ENCODE measurements at regions of chr2 and their contacts with region 1.

Region 1: GRCh38 chr2:176118601-176119339 is 2.2 kb downstream of the HOXD10 start:
- DNase-seq: peak in 1 of 5 donors; percentile 15
- H3K4me3 ChIP-seq: peak overlapping the region; percentile 43
- H3K27ac ChIP-seq: no peak overlapping the region
- H3K4me1 ChIP-seq: no peaks in the 10 kb centered on the region
- H3K27me3 ChIP-seq: no peaks in the 10 kb centered on the region
- CTCF ChIP-seq: no peak
- EP300 ChIP-seq: no peak
- POLR2A ChIP-seq: no peak

Region 2: DNA sequence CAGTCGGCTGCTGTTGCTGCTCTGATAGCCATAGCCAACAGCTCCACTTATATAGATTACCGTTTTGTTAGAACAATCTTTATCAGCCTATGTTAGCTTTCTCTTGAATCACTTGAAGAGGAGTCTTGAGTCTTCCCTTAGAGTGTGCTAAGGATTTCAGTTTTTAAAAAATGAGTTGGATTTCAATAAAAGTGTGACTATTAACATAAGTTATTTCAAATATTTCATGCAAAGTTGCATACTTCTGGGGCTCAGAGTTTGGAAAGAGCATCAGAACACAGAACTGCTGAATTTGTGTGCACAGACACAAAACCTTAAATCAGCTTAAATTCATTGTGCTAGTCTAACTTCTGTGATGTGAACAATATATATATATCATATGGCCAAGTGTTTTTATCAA is 325.2 kb after region 1 on chr2:
- intact Hi-C with region 1: no loop called
- DNase-seq: no peak
- H3K4me3 ChIP-seq: no peak overlapping the region
- H3K27ac ChIP-seq: no peak overlapping the region
- H3K4me1 ChIP-seq: no peaks in the 10 kb centered on the region
- H3K27me3 ChIP-seq: no peaks in the 10 kb centered on the region
- CTCF ChIP-seq: no peak
- EP300 ChIP-seq: no peak
- POLR2A ChIP-seq: no peak

Region 3: DNA sequence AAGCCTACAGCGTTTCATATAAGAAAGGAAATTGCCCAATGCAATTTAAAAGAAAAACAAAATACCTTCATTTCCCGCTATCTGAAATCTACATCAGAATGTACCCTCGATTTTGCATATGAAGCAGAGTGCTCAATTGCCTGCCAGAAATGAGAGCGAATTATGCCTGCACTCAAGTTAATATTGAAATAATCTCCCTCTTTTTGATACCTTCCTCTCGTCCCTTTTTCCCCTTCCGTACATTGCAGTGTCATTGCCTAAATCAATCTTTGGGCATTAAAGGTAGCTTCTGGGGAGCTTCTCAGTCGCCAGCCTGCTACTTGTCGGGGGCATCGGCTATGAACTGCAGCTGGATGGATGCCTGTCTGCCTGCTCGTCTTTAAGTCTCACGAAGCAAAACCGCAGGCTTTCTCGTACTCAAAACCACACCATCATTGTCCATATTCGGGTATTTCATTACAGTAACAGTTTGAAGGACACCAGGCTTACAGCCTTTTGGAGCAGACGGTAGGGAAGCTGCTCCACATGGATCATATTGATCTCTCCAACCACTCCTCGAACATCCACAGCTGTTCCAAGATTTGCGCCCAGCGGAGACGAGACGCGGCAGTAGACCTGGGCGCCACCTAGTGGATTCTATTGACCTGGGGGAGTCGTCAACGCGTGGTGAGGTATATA is 1029.8 kb after region 1 on chr2:
- intact Hi-C with region 1: loop called in 1 of 4 experiments (anchors 5 kb)
- DNase-seq: peak; percentile 49 to 71 (median 70)
- H3K4me3 ChIP-seq: peak overlapping the region; percentile 33
- H3K27ac ChIP-seq: no peak overlapping the region
- H3K4me1 ChIP-seq: no peaks in the 10 kb centered on the region
- H3K27me3 ChIP-seq: no peaks in the 10 kb centered on the region
- CTCF ChIP-seq: peak in 2 of 3 donors; percentile 10 to 19
- EP300 ChIP-seq: no peak
- POLR2A ChIP-seq: no peak

Region 4: DNA sequence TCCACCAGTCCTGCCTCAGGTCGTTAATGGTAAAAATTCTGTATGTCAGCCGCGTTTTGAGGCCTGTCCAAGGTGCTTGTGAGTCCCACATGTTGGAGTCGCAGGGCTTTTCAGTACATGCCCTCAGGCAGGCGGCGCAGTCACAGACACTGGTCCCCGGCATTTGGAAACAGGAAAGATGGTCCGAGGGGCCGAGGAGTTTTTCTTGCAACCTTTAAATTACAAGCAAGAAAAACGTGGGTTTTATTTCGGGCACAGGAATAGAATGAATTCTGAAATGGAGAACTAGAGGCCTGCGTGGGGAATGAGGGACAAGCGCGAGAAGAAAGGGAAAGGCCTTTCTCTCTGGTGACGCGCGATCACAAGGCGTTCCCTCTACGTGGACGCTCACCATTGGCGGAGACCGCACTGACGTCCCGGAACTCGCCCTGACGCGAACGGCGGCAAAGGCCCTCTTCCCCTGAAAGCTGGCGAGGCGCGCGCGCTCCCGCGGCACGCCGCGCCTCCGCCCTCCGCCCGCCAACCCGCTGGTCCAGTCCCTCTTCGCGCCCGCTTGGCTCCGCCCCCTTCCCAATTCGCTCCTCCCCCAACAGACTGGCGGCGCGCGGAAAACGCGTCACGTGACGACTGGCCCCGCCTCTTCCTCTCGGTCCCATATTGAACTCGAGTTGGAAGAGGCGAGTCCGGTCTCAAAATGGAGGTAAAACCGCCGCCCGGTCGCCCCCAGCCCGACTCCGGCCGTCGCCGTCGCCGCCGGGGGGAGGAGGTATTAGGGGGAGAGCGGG is 1093.5 kb after region 1 on chr2 and contains the start of gene HNRNPA3:
- intact Hi-C with region 1: loop called in 1 of 4 experiments (anchors 5 kb)
- DNase-seq: peak; percentile 99 to 100 (median 100)
- H3K4me3 ChIP-seq: peak within 1 kb of the TSS; percentile 94
- H3K27ac ChIP-seq: peak within 1 kb of the TSS; percentile 99
- H3K4me1 ChIP-seq: peaks cover 3% of the 10 kb centered on the region
- H3K27me3 ChIP-seq: no peaks in the 10 kb centered on the region
- CTCF ChIP-seq: peak in 2 of 3 donors; percentile 32 to 33
- EP300 ChIP-seq: peak; percentile 89
- POLR2A ChIP-seq: peak; percentile 95
- total RNA-seq, gene HNRNPA3: 71.0 to 240 (median 216) TPM

Measured in ovary (tissue), 10 donors.